ENCODE measurements at regions of chr12 and their contacts with region 1.

Region 1: GRCh38 chr12:27434673-27435565 is 11.6 kb upstream of the SMCO2 start:
- DNase-seq: no peak
- H3K4me3 ChIP-seq: no peak overlapping the region
- H3K27ac ChIP-seq: no peak overlapping the region
- H3K4me1 ChIP-seq: no peaks in the 10 kb centered on the region
- H3K27me3 ChIP-seq: no peaks in the 10 kb centered on the region
- CTCF ChIP-seq: peak; percentile 67

Region 2: DNA sequence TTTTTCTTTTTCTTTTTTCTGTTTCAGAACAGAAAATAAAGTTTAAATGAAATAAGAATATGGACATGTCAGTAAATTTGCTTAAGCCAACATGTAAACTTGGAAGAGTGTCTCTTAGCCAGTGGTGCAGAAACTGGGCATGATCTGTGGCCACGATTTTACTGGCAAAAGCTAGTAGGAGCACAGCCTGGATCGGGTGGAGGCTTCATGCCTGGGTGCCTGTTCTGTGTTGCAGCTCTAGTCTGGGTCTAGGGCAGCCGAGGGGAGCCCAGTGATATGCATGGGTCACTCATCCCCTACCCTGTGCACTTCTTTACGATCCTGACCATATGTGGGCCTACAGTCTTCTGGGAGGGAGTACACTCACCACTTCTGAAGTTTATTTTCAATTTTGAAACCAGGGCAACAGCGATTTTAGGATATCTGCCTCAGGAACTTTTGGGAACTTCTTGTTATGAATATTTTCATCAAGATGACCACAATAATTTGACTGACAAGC is 34.0 kb before region 1 on chr12:
- intact Hi-C with region 1: no loop called
- DNase-seq: no peak
- H3K4me3 ChIP-seq: no peak overlapping the region
- H3K27ac ChIP-seq: no peak overlapping the region
- H3K4me1 ChIP-seq: no peaks in the 10 kb centered on the region
- H3K27me3 ChIP-seq: no peaks in the 10 kb centered on the region
- CTCF ChIP-seq: no peak

Region 3: GRCh38 chr12:27474344-27474743 is 39.4 kb after region 1 on chr12:
- intact Hi-C with region 1: no loop called
- DNase-seq: no peak
- H3K4me3 ChIP-seq: no peak overlapping the region
- H3K27ac ChIP-seq: no peak overlapping the region
- H3K4me1 ChIP-seq: no peaks in the 10 kb centered on the region
- H3K27me3 ChIP-seq: no peaks in the 10 kb centered on the region
- CTCF ChIP-seq: no peak

Region 4: GRCh38 chr12:27652174-27652763 is 217.3 kb after region 1 on chr12:
- intact Hi-C with region 1: loop called (anchors 5 kb)
- DNase-seq: peak; percentile 76
- H3K4me3 ChIP-seq: no peak overlapping the region
- H3K27ac ChIP-seq: no peak overlapping the region
- H3K4me1 ChIP-seq: no peaks in the 10 kb centered on the region
- H3K27me3 ChIP-seq: no peaks in the 10 kb centered on the region
- CTCF ChIP-seq: peak; percentile 72

Region 5: DNA sequence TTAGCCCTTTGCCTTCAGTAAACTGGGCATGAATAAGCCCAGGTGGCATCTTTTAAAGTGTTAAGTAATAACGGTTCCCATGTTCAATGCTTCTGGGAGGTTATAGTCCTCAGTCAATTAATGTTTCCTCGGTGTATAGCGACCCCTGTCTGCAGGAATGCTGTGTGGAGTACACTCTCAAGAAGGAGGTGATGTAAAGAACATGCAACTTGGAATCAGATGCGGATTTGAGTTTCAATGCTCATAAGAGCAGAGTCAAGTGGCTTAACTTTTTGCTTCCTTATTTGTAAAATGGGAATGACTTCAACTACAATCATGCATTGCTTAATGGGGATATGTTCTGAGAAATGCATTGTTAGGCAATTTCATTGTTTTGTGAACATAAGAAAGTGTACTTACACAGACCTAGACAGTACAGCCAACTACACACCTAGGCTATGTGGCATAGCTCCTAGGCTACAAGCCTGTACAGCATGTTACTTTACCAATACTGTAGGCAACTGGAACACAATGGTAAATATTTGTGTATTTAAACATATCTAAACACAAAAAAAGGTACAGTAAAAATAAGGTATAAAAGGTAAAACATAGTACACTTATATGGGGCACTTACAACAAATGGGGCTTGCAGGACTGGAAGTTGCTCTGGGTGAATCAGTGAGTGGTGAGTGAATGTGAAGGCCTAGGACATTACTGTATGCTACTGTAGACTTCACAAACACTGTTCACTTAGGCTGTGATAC is 269.0 kb after region 1 on chr12:
- intact Hi-C with region 1: loop called (anchors 5 kb)
- DNase-seq: peak; percentile 91
- H3K4me3 ChIP-seq: no peak overlapping the region
- H3K27ac ChIP-seq: no peak overlapping the region
- H3K4me1 ChIP-seq: no peaks in the 10 kb centered on the region
- H3K27me3 ChIP-seq: no peaks in the 10 kb centered on the region
- CTCF ChIP-seq: peak; percentile 87

Region 6: DNA sequence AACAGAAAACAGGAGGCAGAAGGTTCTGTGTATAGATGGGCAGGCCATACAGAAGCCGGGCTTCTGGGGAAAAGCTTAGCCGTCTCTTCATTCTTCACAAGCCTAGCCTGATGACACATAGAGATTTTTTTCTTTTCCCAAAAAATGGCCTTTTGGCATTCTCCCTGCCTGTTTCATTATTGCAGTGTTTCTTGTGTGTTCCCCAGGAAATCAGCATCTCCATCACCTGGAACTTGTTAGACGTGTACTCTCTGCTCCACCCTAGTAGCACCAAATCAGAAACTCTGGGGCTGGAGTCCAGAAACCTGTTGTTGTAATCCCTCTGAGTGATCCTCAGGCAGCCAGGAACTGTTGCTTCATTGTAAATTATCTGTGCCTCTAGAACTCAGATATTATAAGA is 1143.4 kb after region 1 on chr12:
- intact Hi-C with region 1: no loop called
- DNase-seq: no peak
- H3K4me3 ChIP-seq: no peak overlapping the region
- H3K27ac ChIP-seq: no peak overlapping the region
- H3K4me1 ChIP-seq: no peaks in the 10 kb centered on the region
- H3K27me3 ChIP-seq: no peaks in the 10 kb centered on the region
- CTCF ChIP-seq: no peak